ENCODE measurements at regions of chr7 and their contacts with region 1.

Region 1: DNA sequence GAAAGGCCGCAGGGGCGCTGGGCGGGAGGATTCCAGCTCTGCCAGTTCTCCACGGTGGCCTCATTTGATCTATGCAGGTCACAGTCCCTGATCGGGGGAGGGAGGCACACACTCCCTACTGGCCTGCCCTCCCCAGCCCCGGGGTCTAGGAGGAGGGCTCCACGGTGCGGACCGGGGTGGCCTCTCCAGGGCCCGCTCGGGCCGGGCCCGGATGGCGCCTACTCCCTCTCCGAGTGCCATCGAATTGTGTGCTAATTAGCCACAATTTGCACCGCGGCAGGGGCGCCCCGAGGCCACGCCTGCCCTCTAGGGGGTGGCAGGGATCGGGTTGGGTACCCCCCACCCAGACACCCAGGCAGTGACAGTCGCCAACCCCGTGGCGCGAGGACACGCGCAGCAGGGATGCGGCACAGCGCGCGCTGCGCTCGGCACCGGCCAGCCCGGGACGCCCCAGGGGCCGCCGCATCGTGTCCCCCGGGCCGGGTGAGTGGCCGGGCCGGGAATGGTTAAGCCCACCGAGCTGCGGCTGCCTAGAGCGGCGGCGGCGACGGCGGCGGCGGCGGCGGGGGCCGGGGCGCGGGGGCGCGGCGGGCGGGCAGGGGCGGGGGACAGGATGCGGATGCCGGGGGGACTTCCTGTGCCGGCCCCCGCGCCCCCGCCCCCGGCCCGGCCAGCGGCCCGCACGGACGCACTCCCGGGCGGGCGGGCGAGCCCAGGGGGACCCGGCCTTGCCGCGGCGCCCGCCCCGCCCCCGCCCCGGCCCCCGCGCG is at the start of gene ZNF853:
- DNase-seq: peak in 1 of 2 experiments; percentile 62
- H3K4me3 ChIP-seq: peak within 1 kb of the TSS; percentile 61
- H3K4me3 Mint-ChIP-seq: peak within 1 kb of the TSS; percentile 76
- H3K27ac Mint-ChIP-seq: no peak within 1 kb of the TSS
- H3K4me1 ChIP-seq: peaks cover 16% of the 10 kb centered on the region
- H3K4me1 Mint-ChIP-seq: no peaks in the 10 kb centered on the region
- H3K27me3 ChIP-seq: no peaks in the 10 kb centered on the region
- H3K27me3 Mint-ChIP-seq: no peaks in the 10 kb centered on the region
- CTCF ChIP-seq: no peak
- total RNA-seq, gene ZNF853: 10.1 and 12.3 TPM in 2 replicates

Region 2: DNA sequence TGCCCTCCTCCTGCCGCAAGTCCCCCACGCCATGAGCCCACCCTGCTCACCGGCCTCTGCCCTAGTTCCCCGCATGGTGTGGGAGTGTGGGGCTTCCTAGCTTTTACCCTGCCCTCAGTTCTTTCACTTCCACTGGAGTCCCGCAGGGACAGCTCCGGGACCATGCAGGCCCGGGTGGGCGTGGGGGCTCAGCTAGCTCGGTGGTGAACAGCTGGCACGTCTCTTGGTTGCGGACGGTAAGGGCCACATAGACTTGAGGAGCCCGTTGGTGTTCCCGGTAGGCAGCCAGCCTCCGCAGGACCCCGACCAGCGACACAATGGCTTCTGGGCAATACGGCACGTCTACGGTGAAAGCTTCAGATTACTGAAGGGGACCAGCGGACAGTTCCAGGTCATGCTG is 319.8 kb after region 1 on chr7:
- CTCF ChIA-PET with region 1: no interaction called
- POLR2A ChIA-PET with region 1: no interaction called
- intact Hi-C with region 1: loop called (anchors 10 kb)
- DNase-seq: no peak
- H3K4me3 ChIP-seq: no peak overlapping the region
- H3K4me3 Mint-ChIP-seq: no peak overlapping the region
- H3K27ac Mint-ChIP-seq: no peak overlapping the region
- H3K4me1 ChIP-seq: no peaks in the 10 kb centered on the region
- H3K4me1 Mint-ChIP-seq: no peaks in the 10 kb centered on the region
- H3K27me3 ChIP-seq: no peaks in the 10 kb centered on the region
- H3K27me3 Mint-ChIP-seq: no peaks in the 10 kb centered on the region
- CTCF ChIP-seq: no peak